OCI-LY7 (cell line): ENCODE measurements at regions of chr5 and their contacts with region 1.

Region 1: DNA sequence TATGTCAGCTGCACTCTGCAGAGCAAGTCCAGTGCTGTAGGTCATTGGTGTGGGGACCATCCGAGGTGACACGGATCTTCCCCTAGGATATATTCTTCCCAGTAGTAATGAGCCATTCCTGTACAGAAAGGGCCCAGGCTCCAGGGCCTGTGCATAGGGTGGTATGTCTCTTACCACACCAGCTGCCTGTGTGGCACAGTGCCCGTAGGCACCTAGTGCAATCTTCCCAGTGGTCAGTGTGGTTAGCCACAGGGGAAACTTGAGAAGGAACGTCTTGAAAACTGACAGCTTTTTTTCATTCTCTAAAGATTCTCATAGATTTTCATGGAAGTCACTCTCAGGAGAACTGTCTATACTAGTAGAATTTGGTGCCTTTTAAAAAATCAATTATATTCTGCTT is 39.8 kb downstream of the CYSTM1 start:
- DNase-seq: no peak
- H3K4me3 ChIP-seq: no peak overlapping the region
- H3K27ac ChIP-seq: no peak overlapping the region
- H3K4me1 ChIP-seq: no peaks in the 10 kb centered on the region
- CTCF ChIP-seq: no peak

Region 2: GRCh38 chr5:140020601-140021177 is 194.1 kb before region 1 on chr5:
- CTCF ChIA-PET with region 1: no interaction called
- POLR2A ChIA-PET with region 1: no interaction called
- intact Hi-C with region 1: no loop called
- DNase-seq: no peak
- H3K4me3 ChIP-seq: no peak overlapping the region
- H3K27ac ChIP-seq: no peak overlapping the region
- H3K4me1 ChIP-seq: no peaks in the 10 kb centered on the region
- CTCF ChIP-seq: no peak

Region 3: GRCh38 chr5:140113699-140114263 is 101.0 kb before region 1 on chr5 and contains the start of gene PURA:
- CTCF ChIA-PET with region 1: no interaction called
- POLR2A ChIA-PET with region 1: no interaction called
- intact Hi-C with region 1: no loop called
- DNase-seq: peak; percentile 97
- H3K4me3 ChIP-seq: peak within 1 kb of the TSS; percentile 86
- H3K27ac ChIP-seq: peak within 1 kb of the TSS; percentile 68
- H3K4me1 ChIP-seq: peaks cover 74% of the 10 kb centered on the region
- CTCF ChIP-seq: peak; percentile 68
- total RNA-seq, gene PURA: 19.3 and 19.7 TPM in 2 replicates

Region 4: GRCh38 chr5:140273401-140273877 is 58.6 kb after region 1 on chr5:
- CTCF ChIA-PET with region 1: no interaction called
- POLR2A ChIA-PET with region 1: no interaction called
- intact Hi-C with region 1: no loop called
- DNase-seq: no peak
- H3K4me3 ChIP-seq: no peak overlapping the region
- H3K27ac ChIP-seq: peak overlapping the region; percentile 2
- H3K4me1 ChIP-seq: peaks cover 29% of the 10 kb centered on the region
- CTCF ChIP-seq: no peak

Region 5: DNA sequence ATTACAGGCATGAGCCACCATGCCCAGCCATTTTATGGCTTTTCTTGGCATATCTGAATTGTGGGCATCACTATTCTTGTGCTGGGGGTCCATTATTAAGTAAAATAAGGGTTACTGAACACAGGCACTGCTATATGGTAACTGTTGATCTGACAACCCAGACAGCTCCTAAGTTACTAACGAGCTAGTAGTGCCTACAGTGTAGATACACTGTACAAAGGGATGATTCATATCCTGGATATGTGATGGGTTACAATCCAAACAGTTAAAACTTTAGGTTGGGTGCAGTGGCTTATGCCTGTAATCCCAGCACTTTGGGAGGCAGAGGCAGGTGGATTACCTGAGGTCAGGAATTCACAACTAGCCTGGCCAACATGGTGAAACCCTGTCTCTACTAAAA is 413.9 kb after region 1 on chr5:
- CTCF ChIA-PET with region 1: no interaction called
- POLR2A ChIA-PET with region 1: no interaction called
- intact Hi-C with region 1: loop called (anchors 10 kb)
- DNase-seq: no peak
- H3K4me3 ChIP-seq: no peak overlapping the region
- H3K27ac ChIP-seq: no peak overlapping the region
- H3K4me1 ChIP-seq: no peaks in the 10 kb centered on the region
- CTCF ChIP-seq: no peak